ENCODE measurements at regions of chr4 and their contacts with region 1.

Region 1: DNA sequence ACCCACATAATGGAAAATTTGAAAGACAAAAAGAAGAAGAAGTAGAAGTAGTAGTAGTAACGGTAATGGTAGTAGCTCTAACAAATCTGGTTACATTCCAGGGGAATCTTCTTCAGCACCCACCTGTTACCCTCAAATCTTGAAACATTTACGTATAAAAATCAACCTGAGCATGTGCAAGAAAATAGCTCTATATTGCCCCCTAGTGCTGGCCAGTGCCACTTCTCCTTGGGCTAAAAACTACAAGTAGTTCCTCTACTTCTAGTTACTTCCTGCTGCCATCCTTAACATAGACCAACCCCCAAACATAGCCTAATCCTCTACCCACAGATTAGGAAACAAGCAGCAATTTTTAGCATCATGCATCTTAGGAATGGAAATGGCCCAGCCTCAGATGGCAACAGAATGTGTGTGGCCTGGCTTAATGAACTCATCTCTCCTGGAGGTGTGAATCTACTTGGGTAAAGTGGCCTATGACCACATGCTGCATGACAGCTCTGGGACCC is 3.1 kb downstream of the PDGFC start:
- DNase-seq: no peak
- H3K4me3 ChIP-seq: peak overlapping the region; percentile 85 to 92 (median 88)
- H3K27ac ChIP-seq: peak overlapping the region; percentile 94 to 98 (median 96)
- H3K4me1 ChIP-seq: peaks cover 22 to 53% (median 46%) of the 10 kb centered on the region in 4 donors
- H3K27me3 ChIP-seq: no peaks in the 10 kb centered on the region
- CTCF ChIP-seq: peak; percentile 86 to 95 (median 86)
- EP300 ChIP-seq: no peak
- POLR2A ChIP-seq: no peak

Region 2: DNA sequence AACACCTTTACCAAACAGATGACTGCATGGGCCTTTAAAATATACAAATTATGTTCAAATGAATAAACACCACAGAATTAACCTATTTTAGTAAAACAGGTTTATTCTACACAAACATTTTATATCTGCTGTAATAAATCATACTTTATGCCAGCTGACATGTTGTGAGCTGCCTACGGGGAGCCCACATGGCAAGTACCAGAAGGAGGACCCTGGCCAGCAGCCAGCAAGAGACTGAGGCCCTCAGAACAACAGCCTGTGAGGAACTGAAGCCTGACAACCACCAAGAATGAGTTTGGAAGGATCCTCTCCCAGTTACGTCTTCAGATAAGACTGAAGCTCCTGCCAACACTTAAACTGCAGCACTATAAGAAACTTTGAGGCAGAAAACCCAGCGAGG is 373.9 kb before region 1 on chr4:
- intact Hi-C with region 1: loop called (anchors 5 kb)
- DNase-seq: no peak
- H3K4me3 ChIP-seq: no peak overlapping the region
- H3K27ac ChIP-seq: no peak overlapping the region
- H3K4me1 ChIP-seq: peaks cover 0 to 11% (median 6%) of the 10 kb centered on the region in 4 donors
- H3K27me3 ChIP-seq: no peaks in the 10 kb centered on the region
- CTCF ChIP-seq: no peak
- EP300 ChIP-seq: no peak
- POLR2A ChIP-seq: no peak

Region 3: GRCh38 chr4:156815717-156816359 is 152.7 kb before region 1 on chr4:
- intact Hi-C with region 1: no loop called
- DNase-seq: no peak
- H3K4me3 ChIP-seq: no peak overlapping the region
- H3K27ac ChIP-seq: no peak overlapping the region
- H3K4me1 ChIP-seq: peaks cover 0 to 8% (median 5%) of the 10 kb centered on the region in 4 donors
- H3K27me3 ChIP-seq: no peaks in the 10 kb centered on the region
- CTCF ChIP-seq: no peak
- EP300 ChIP-seq: no peak
- POLR2A ChIP-seq: no peak

Region 4: DNA sequence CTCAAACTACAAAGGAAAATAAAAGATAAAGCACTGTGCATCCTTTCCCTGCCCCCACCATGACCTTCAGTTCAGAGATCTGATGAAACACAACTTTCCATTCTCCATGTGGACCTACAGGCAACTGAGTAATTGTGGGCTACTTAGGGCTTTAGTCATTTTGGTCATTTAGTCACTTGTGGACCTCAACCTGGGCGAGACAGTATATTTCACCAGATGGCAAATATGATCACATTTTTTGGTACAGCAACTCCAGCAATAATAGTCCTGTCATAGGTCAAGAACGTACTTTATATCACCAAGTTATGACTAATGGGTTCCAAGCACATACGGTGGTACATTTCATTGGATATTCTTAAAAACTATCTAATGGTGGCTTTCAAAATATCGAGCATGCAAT is 138.2 kb before region 1 on chr4:
- intact Hi-C with region 1: loop called (anchors 10 kb)
- DNase-seq: no peak
- H3K4me3 ChIP-seq: no peak overlapping the region
- H3K27ac ChIP-seq: peak overlapping the region in 1 of 4 donors; percentile 63
- H3K4me1 ChIP-seq: peaks cover 4 to 40% (median 22%) of the 10 kb centered on the region in 4 donors
- H3K27me3 ChIP-seq: no peaks in the 10 kb centered on the region
- CTCF ChIP-seq: no peak
- EP300 ChIP-seq: no peak
- POLR2A ChIP-seq: no peak